ENCODE measurements at regions of chr5 and their contacts with region 1.

Region 1: DNA sequence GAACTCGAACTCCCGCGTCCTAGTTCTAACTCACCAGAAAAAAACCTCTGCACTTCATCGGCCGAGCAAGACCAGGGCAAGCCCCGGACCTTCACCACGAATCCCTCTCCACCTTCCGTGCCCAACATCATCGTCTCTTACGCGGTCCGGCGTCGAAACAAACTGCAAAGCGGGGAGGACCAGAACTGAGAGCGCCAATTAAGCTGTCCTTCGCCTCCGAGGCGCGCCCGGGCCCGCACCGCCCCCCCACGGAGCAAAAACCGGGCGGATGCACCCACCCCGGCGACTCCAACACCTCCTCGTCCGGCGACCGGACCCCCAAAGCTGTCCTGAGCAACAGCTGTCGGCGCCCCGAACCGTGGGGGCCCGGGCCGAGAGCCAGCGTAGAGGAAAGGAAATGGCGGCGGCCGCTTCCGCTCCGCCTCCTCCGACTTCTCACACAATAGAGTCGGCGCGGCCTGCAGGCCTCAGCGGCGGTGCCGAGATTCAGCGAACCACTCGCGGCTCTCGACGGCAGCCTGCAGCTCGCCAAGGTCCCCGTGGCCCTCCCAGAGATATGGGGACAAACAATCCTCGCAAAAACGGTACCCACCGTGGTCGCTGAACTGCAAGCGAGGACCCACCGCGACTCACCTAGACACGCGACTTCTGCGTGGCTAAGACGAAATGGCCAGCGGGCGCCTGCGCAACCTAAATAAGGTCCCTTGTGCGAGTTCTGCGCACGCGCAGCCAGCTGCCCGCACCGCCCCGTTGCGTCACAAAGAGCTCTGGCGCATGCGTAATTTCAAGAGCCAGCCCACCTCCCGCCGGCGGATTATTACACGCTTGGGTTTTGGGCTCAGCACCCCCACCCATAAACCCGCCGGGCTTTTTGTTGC is at the start of gene HNRNPH1:
- DNase-seq: peak; percentile 98
- ATAC-seq: peak; percentile 84
- H3K4me3 ChIP-seq: peak within 1 kb of the TSS; percentile 69
- H3K27ac ChIP-seq: peak within 1 kb of the TSS; percentile 95
- H3K4me1 ChIP-seq: peaks cover 11% of the 10 kb centered on the region
- H3K27me3 ChIP-seq: no peaks in the 10 kb centered on the region
- CTCF ChIP-seq: 0 out of 2 replicates have a peak, but pooled peaks have one; percentile 6
- POLR2A ChIP-seq: peak; percentile 100
- RAD21 ChIP-seq: no peak
- total RNA-seq, gene HNRNPH1: 300 and 735 TPM in 2 replicates

Region 2: DNA sequence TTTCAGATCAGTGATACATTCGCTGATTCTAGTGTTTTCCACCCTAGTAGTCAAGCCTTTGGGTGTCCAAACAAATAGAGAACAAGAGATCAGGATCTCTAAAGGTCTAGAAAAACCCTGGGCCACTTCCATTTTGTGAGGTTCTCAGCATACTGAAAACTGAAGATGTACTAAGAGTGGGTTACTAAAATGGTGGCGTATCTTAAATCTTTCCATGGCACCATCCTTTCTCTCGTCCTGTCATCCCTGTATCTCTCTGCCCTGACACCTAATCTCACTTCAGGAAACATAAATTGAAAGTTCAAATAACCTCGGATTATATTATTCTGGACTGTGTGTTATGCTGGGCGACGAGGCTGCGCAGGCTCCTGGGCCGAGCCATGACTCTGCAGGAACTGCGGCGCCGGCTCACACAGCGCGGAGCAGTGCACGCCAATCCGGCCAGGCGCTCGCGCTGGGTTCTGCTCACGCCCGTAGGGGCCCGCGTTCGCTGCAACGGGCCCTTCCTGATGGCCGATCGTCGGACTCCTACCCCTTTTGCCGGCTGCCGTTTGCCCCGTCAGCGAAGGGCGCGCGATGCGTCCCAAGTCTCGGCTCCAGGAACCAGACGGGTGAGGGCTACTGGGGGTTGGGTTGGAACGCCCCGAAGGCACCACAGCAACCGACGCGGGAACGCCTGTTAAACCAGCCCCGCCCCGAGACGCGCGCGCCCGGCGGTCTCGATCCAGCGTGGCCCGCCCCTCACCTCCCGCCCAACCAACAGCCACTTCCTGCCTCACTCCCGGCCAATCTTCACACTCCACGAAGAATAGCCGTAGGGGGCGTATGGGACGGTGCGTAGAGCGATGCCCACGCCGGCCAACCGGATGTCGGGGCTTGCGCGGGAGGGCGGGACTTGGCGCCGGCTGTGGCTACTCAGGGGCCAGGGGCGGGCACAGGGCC is 75.0 kb after region 1 on chr5:
- CTCF ChIA-PET with region 1: no interaction called
- POLR2A ChIA-PET with region 1: no interaction called
- dilution Hi-C with region 1: no loop called
- in situ Hi-C with region 1: no loop called
- intact Hi-C with region 1: loop called (anchors 5 kb)
- DNase-seq: peak; percentile 99
- ATAC-seq: peak; percentile 92
- H3K4me3 ChIP-seq: peak overlapping the region; percentile 86
- H3K27ac ChIP-seq: peak overlapping the region; percentile 83
- H3K4me1 ChIP-seq: peaks cover 2% of the 10 kb centered on the region; the same call in 1 of the 2 replicates
- H3K27me3 ChIP-seq: no peaks in the 10 kb centered on the region
- CTCF ChIP-seq: no peak
- POLR2A ChIP-seq: peak; percentile 89
- RAD21 ChIP-seq: peak; percentile 17; the same call in 1 of the 2 replicates

Region 3: GRCh38 chr5:179821581-179822432 is 198.6 kb after region 1 on chr5:
- CTCF ChIA-PET with region 1: no interaction called
- POLR2A ChIA-PET with region 1: interaction called, 5 read pairs
- dilution Hi-C with region 1: no loop called
- in situ Hi-C with region 1: no loop called
- intact Hi-C with region 1: loop called (anchors 5 kb)
- DNase-seq: peak; percentile 90
- ATAC-seq: peak; percentile 62
- H3K4me3 ChIP-seq: peak overlapping the region; percentile 87
- H3K27ac ChIP-seq: peak overlapping the region; percentile 90
- H3K4me1 ChIP-seq: peaks cover 39% of the 10 kb centered on the region
- H3K27me3 ChIP-seq: no peaks in the 10 kb centered on the region
- CTCF ChIP-seq: no peak
- POLR2A ChIP-seq: peak; percentile 56; the same call in 1 of the 2 replicates
- RAD21 ChIP-seq: no peak

Measured in IMR-90 (cell line).